Posterior vena cava (tissue), 2 donors: ENCODE measurements at regions of chr5 and their contacts with region 1.

Region 1: DNA sequence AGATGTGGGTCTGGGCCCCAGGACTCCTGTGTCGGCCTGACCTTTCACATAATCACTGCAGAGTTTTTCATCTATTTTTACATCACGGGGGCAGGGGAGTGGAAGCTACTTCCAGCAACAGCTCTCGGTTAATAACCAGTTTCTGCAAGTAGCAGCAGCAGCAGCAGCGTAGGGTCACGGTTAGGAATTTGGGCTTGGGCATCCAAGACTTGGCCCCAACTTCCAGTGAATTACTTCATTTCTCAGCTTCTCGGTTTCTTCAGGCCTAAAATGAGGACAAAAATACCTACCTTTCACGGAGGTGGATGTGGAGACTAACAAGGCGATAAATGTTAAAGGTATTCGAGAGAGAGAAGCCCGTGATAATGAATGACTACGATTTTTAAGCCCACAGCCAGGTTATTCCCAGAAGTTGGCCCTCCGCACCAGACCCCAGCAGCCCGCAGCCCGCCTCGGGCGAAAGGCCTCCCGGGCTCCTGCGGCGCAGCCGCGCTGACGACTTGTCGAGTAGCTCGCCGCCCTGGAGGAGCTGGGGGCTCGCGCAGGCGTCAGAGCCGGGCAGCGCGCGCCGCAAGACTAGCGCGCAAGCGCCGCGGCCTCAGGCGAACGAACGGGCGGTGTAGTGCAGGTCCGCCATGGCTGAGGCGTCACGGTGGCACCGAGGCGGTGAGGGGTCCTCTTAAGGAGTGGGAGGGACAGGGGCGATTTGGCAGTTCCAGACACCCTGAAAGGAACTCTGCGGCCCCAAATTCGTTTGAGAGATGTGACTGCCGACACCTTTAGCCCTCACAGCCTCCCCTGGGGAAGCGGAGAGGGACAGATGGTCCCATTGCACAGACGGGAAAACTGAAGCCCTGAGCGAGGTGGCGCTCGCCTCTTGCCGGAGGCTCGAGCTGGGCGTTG is at the start of gene PKD2L2:
- DNase-seq: peak; percentile 95
- total RNA-seq, gene PKD2L2: 0.29 TPM in 1 of 2 donors, not detected in the other

Region 2: GRCh38 chr5:137714946-137715345 is 174.2 kb before region 1 on chr5:
- intact Hi-C with region 1: no loop called
- DNase-seq: no peak

Region 3: GRCh38 chr5:137833463-137833862 is 55.6 kb before region 1 on chr5:
- intact Hi-C with region 1: loop called in 1 of 2 experiments (anchors 10 kb)
- DNase-seq: no peak

Region 4: GRCh38 chr5:138360941-138361452 is 471.9 kb after region 1 on chr5:
- intact Hi-C with region 1: no loop called
- DNase-seq: no peak